ENCODE measurements at regions of chr12 and their contacts with region 1.

Region 1: DNA sequence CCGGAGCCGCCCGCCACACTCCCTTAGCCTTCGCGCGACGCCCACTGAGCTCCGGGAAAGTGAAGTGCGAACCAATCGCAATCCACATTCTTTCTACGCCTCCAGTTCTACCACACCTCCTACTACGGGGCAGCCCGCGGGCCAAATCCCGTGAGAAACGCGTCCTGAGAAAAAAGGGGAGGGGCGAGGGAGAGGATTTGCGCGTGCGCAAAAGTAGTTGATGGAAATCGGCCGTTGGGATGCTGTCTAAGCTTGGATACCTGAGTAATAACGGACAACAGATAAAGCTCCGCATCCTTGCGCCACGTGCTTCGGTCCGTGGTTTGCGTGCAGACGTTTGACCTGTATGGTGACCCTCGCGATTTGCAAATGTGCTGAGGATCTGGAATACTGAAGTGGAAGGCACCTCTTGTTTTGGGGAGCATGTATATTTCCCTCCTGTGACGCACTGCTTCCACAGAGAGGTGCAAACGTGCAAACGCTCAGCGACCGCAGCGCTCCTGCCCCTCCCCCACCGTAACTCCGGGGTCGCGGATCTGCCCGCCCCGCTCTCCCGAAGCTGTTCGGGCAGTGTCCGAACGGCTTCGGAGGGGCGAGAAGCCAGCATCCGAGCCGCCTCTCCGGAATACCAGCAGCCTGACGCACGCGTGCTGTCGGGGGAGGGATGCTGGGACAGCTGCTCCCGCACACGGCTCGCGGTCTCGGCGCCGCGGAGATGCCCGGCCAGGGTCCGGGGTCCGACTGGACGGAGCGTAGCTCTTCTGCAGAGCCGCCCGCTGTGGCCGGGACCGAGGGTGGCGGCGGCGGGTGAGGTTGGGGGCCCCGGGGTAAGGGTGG is at the starts of genes FAM216A and GPN3:
- DNase-seq: peak; percentile 96 to 98 (median 97)
- ATAC-seq: peak; percentile 95 to 97 (median 96)
- H3K4me3 ChIP-seq: peak within 1 kb of the TSS; percentile 59 to 97 (median 78)
- H3K27ac ChIP-seq: peak within 1 kb of the TSS in 11 of 12 donors; percentile 83 to 97 (median 87)
- H3K4me1 ChIP-seq: peaks cover 0 to 30% (median 16%) of the 10 kb centered on the region in 12 donors
- H3K27me3 ChIP-seq: no peaks in the 10 kb centered on the region
- CTCF ChIP-seq: no peak
- POLR2A ChIP-seq: peak in 1 of 2 donors; percentile 66
- total RNA-seq, gene FAM216A: 3.6 to 8.0 (median 4.7) TPM
- total RNA-seq, gene GPN3: 14.5 to 37.0 (median 28.4) TPM

Region 2: DNA sequence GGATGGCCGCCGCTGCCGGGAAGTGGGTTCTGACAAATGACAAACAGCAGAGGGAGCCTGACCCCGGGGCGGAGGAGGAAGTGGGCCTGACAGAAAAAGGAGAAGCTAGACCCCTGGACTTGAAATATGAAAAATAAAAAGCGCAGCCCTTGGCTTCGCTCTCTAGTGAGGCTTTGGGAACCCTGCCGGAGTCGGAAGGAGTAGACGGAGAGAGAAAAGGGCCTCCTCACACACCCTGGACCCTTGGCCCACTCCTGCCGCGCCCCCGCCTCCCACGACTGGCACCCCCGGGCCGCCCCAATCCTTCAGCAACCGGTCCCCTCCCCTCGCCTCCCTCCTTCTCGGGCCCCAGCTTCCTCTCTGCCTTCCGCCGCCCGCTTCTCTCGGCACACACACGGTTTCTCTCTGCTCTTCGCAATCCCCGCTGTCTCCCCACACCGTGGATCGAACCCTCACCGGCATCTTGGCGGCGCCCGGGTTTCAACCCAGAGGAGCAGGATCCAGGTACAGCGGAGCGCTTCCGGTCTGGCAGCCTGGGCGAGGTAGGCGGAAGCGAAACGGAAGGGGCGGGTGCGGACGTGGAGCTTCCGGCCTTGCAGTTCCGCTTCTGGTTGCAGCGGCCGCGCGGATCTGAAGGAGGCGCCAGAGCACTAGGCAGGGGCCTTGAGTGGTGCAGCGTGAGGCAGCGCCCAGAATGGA is 18.5 kb before region 1 on chr12 and contains the start of gene ARPC3:
- intact Hi-C with region 1: loop called in 2 of 10 experiments (anchors 2 kb)
- DNase-seq: peak; percentile 94 to 97 (median 95)
- ATAC-seq: peak; percentile 98 to 99 (median 99)
- H3K4me3 ChIP-seq: peak within 1 kb of the TSS; percentile 62 to 96 (median 85)
- H3K27ac ChIP-seq: peak within 1 kb of the TSS; percentile 74 to 99 (median 92)
- H3K4me1 ChIP-seq: peaks cover 0 to 46% (median 14%) of the 10 kb centered on the region in 12 donors
- H3K27me3 ChIP-seq: no peaks in the 10 kb centered on the region
- CTCF ChIP-seq: peak; percentile 76 to 96 (median 86)
- POLR2A ChIP-seq: peak in 1 of 2 donors; percentile 73
- total RNA-seq, gene ARPC3: 77.2 to 251 (median 108) TPM

Region 3: GRCh38 chr12:110501752-110502738 is 33.6 kb after region 1 on chr12 and contains the starts of genes RAD9B and VPS29:
- intact Hi-C with region 1: loop called in 6 of 10 experiments (anchors 1 to 5 kb)
- DNase-seq: peak; percentile 98 to 99 (median 98)
- ATAC-seq: peak; percentile 98 to 99 (median 99)
- H3K4me3 ChIP-seq: peak within 1 kb of the TSS; percentile 65 to 98 (median 89)
- H3K27ac ChIP-seq: peak within 1 kb of the TSS; percentile 64 to 96 (median 90)
- H3K4me1 ChIP-seq: peaks cover 0 to 40% (median 29%) of the 10 kb centered on the region in 12 donors
- H3K27me3 ChIP-seq: no peaks in the 10 kb centered on the region
- CTCF ChIP-seq: no peak
- POLR2A ChIP-seq: peak in 1 of 2 donors; percentile 87
- total RNA-seq, gene RAD9B: 0.67 to 4.8 (median 2.4) TPM in 7 of 9 donors, not detected in the others
- total RNA-seq, gene VPS29: 66.7 to 149 (median 89.5) TPM

Region 4: GRCh38 chr12:110606253-110606611 is 137.8 kb after region 1 on chr12:
- intact Hi-C with region 1: loop called in 4 of 10 experiments (anchors 5 kb)
- DNase-seq: no peak
- ATAC-seq: no peak
- H3K4me3 ChIP-seq: peak overlapping the region in 2 of 12 donors; percentile 6 to 47
- H3K27ac ChIP-seq: peak overlapping the region in 4 of 12 donors; percentile 28 to 91 (median 40)
- H3K4me1 ChIP-seq: peaks cover 0 to 11% (median 0%) of the 10 kb centered on the region in 12 donors
- H3K27me3 ChIP-seq: no peaks in the 10 kb centered on the region
- CTCF ChIP-seq: no peak
- POLR2A ChIP-seq: no peak

Region 5: DNA sequence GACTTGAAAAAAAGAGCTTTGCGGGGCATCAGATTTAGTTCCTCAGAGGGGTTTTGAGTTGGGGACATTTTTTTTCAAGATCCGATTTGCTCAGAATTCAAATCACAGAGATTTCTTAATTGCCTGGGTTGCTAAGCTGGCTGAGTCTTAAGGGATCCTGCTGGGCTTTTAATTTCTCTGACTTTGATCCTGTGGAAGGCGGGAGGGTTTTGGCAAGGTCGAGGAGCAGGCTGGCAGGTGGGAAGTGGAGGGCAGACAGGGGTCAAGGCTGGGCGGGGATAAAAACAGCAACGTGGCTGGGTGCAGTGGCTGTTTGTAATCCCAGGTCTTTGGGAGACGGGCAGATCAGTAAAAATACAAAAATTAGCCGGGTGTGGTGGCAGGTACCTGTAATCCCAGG is 344.9 kb after region 1 on chr12:
- intact Hi-C with region 1: no loop called
- DNase-seq: no peak
- ATAC-seq: no peak
- H3K4me3 ChIP-seq: no peak overlapping the region
- H3K27ac ChIP-seq: no peak overlapping the region
- H3K4me1 ChIP-seq: no peaks in the 10 kb centered on the region
- H3K27me3 ChIP-seq: no peaks in the 10 kb centered on the region
- CTCF ChIP-seq: no peak
- POLR2A ChIP-seq: no peak